Left ventricle myocardium superior (tissue), 1 donor: ENCODE measurements at regions of chr2 and their contacts with region 1.

Region 1: DNA sequence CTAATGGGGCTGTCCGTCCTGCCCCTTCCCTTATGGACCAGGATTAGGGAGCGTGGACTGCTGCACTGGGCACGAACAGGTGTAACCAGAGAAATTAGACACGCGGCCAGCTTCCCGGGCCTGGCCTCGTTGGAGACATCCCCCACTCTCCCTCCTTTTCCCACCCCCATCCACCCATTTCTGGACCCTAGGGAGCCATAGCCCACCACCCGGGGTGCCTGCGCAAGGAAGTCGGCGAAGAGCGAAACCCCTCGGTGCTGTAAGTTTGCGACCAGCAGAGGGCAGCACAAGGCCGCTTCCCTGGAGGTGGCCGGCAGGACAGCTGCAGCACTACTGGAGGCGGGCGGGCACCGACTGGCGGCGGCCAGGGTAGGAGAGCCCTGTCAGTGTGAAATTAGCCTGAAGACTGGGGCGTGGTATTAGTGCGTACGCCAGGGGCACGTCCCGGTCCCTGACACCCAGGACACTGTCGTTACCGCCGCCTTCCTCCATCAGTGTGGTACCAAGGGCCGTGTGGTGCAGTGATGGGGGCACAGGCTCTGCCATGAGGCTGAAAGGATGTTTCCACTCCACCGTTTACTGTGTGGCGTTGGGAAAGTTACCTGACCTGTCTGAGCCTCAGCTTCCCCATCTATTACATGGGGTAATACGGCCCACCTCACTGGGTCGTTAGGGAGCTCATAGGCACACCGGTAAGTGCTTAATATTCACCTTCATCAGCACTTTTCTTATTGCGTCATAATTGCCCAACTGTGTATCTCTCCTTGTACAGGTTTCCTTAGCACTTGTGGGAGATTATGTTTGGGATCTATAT is 36.0 kb upstream of the CD207 start:
- DNase-seq: peak; percentile 92
- ATAC-seq: peak; percentile 98

Region 2: DNA sequence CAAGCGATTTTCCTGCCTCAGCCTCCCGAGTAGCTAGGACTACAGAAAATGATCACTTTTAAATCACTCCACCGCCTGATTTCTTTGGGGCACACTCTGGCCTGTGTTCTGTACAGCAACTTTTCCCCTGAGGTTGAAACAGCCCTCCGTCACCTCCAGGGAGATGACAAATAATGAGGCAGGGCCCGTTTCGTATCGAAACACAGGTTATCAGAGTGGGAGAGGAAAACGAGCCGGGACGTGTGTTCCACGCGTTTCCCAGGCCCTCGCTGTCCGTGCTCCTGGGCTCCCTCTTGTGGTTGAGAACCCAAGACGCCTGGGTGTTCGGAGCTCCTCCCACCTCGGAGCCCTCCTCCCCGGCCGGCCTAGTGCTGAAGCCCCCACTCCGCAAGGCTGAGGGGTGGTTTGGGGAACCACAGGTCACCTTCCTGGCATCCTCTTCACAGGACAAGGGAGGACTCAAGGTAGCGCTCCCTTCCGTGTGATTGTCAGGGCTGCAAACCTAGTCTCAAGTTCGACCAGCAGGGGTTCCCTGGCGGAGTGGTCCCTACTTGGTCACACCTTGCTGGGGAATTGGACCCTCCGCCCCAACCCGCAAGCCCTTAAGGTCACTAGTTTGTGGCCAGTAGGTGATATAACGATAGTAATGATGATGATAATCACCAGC is 76.9 kb after region 1 on chr2:
- intact Hi-C with region 1: loop called (anchors 5 kb)
- DNase-seq: peak; percentile 81
- ATAC-seq: peak; percentile 96